ENCODE measurements at regions of chr7 and their contacts with region 1.

Region 1: DNA sequence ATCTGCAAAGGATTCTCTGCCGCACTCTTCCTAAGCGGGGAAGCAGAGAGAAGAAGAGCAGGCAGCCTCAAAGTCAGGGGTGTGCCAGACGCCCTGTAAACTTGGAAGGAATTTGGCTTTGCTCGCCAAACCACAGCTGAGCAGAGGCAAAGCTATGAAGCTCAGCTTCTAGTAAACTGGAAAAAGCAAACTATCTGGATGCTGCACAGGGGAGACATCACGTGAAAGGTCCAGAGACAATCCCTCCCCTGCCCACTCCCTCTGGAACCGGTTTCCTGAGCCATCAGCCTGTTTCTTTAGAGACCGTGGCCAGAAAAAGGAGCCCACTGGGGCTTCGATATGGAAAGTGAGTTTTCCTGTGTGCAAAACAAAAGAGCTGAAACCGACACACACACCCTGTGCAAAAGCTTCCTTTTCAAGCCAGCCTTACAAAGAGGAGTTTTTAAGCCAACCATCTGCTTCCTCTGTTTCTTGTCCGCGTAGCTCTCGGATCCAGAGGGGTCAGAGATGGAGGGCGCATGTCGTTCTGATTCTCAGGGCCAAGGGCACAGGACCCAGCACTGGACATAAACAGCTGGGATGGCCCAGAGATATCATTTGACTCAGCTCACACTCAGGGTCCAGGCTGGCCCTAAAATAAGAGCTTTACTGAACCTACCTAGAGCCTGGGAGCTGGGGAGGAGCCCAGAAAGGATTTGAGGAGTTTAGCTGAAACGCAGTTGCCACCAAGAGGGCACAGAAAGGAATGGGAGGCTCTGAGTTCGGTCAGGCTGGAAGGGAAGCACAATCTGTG is 58.2 kb upstream of the DNAAF5 start:
- DNase-seq: peak; percentile 86
- H3K4me3 ChIP-seq: no peak overlapping the region
- CTCF ChIP-seq: no peak

Region 2: DNA sequence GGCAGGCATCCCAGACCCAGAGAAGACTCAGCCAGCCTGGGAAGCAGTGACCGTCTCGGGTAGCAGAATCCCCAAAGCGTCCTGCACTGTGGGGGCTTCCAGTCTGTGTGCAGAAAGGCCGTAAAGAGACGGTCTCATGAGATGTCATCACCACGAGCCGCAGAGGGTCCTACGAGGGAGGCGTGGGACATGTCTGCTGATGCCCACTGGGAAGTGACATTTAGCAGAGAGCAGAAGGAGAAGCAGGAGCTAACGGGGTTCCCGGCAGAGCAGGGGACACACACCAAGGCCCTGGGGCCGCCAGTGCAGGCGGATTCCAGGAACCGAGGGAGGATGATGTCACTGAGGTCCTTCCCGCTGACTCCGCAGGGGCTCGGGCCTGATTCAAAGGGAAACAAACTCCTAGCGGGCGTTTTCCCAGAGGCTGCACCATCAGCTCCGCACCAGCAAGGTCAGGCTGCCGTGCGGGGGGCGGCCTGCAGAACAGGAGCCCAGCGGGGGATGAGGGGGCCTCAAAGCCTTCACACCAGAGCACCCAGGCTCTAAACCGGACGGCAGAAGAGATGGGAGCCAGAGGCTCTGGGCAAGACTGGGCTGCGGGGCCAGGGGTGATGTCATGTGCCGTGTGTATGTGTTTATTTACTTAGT is 63.3 kb before region 1 on chr7:
- in situ Hi-C with region 1: loop called (anchors 5 kb)
- DNase-seq: no peak
- H3K4me3 ChIP-seq: no peak overlapping the region
- CTCF ChIP-seq: no peak

Region 3: DNA sequence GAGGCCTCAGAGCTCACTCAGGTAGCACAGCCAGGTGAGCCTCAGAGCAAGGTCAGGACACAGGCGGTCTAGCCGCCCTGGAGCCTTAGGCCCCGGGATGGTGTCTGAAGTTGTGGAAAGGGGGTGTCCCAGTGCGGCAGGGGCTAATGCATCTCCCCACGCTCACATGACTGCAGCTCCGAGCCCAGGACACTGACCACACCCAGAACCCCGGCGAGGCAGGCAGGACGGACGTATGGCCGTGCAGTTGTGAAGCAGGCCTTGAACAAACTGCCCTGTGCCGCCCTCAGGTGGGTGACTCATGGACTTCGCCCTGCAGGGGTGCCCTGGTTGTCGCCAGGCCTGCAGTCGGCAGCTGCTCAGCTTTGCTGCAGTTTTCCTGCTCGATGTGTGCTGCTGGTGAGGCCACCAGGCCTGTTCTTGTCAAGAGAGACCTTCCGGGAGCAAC is 63.8 kb after region 1 on chr7:
- in situ Hi-C with region 1: loop called (anchors 5 kb)
- DNase-seq: no peak
- H3K4me3 ChIP-seq: no peak overlapping the region
- CTCF ChIP-seq: no peak

Measured in astrocyte of the cerebellum (primary cell).